Natural killer cell (primary cell): ENCODE measurements at regions of chr7 and their contacts with region 1.

Region 1: DNA sequence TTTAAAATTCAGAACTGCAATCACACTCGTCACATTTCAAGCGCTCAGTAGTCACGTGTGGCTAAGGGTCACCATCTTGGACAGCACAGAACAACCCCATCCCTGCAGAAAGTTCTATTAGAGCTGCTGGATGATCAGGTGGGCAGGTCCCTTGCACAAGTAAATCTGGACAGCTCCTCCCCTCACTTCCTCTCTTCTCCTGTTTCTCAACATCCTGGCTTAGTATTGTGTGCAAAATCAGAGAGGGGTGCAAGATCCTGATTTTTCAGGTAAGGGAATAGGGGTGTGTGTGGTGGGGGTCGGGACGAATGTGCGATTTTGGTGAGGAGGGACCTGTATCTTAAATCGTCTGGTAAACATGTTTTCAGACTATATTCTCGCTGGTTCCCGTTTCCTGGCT is at the start of gene GIMAP4:
- DNase-seq: peak in 1 of 2 donors; percentile 66
- ATAC-seq: peak; percentile 52 to 63 (median 58)
- H3K4me3 ChIP-seq: peak within 1 kb of the TSS; percentile 72
- H3K4me3 Mint-ChIP-seq: peak within 1 kb of the TSS; percentile 96
- H3K27ac ChIP-seq: peak within 1 kb of the TSS; percentile 66
- H3K27ac Mint-ChIP-seq: peak within 1 kb of the TSS; percentile 90 to 95
- H3K4me1 ChIP-seq: peaks cover 52% of the 10 kb centered on the region
- H3K4me1 Mint-ChIP-seq: peaks cover 69 to 80% of the 10 kb centered on the region in 2 donors
- H3K27me3 ChIP-seq: no peaks in the 10 kb centered on the region
- H3K27me3 Mint-ChIP-seq: no peaks in the 10 kb centered on the region
- CTCF ChIP-seq: no peak
- total RNA-seq, gene GIMAP4: 105 to 215 (median 124) TPM

Region 2: DNA sequence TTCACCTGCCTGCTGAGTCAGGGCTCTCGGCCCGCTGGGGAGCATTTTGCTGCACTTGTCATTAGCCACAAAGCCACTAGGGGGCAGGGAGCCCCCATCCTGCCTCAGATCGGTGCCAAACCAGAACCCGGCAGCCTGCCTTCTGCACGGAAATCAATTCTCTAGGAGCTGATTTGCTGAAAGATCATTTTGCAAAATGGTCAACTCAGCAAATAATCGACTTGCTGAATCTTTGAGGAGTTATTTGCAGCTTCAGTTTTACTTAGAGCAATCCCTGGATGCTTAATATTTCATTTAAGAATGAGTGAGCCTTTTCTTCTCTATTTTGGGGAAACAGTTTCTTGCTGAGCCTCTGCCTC is 118.4 kb before region 1 on chr7:
- intact Hi-C with region 1: loop called (anchors 2 kb)
- DNase-seq: peak; percentile 78 to 95
- ATAC-seq: peak; percentile 69 to 76 (median 72)
- H3K4me3 ChIP-seq: no peak overlapping the region
- H3K4me3 Mint-ChIP-seq: peak overlapping the region; percentile 96
- H3K27ac ChIP-seq: peak overlapping the region; percentile 89
- H3K27ac Mint-ChIP-seq: peak overlapping the region; percentile 92 to 97
- H3K4me1 ChIP-seq: peaks cover 68% of the 10 kb centered on the region
- H3K4me1 Mint-ChIP-seq: peaks cover 53 to 65% of the 10 kb centered on the region in 2 donors
- H3K27me3 ChIP-seq: no peaks in the 10 kb centered on the region
- H3K27me3 Mint-ChIP-seq: no peaks in the 10 kb centered on the region
- CTCF ChIP-seq: peak; percentile 93

Region 3: GRCh38 chr7:150514748-150515222 is 52.4 kb before region 1 on chr7 and contains the start of gene GIMAP7:
- intact Hi-C with region 1: loop called (anchors 2 kb)
- DNase-seq: peak; percentile 46 to 83
- ATAC-seq: peak; percentile 74 to 84 (median 81)
- H3K4me3 ChIP-seq: peak within 1 kb of the TSS; percentile 83
- H3K4me3 Mint-ChIP-seq: peak within 1 kb of the TSS; percentile 100
- H3K27ac ChIP-seq: peak within 1 kb of the TSS; percentile 73
- H3K27ac Mint-ChIP-seq: peak within 1 kb of the TSS; percentile 96 to 100
- H3K4me1 ChIP-seq: peaks cover 34% of the 10 kb centered on the region
- H3K4me1 Mint-ChIP-seq: peaks cover 58 to 65% of the 10 kb centered on the region in 2 donors
- H3K27me3 ChIP-seq: no peaks in the 10 kb centered on the region
- H3K27me3 Mint-ChIP-seq: no peaks in the 10 kb centered on the region
- CTCF ChIP-seq: no peak
- total RNA-seq, gene GIMAP7: 66.3 to 100 (median 67.6) TPM

Region 4: GRCh38 chr7:150556521-150557138 is 10.5 kb before region 1 on chr7:
- intact Hi-C with region 1: loop called (anchors 1 kb)
- DNase-seq: peak in 1 of 2 donors; percentile 79
- ATAC-seq: peak; percentile 97 to 99 (median 98)
- H3K4me3 ChIP-seq: no peak overlapping the region
- H3K4me3 Mint-ChIP-seq: peak overlapping the region; percentile 85
- H3K27ac ChIP-seq: peak overlapping the region; percentile 89
- H3K27ac Mint-ChIP-seq: peak overlapping the region; percentile 89 to 95
- H3K4me1 ChIP-seq: peaks cover 12% of the 10 kb centered on the region
- H3K4me1 Mint-ChIP-seq: peaks cover 50 to 63% of the 10 kb centered on the region in 2 donors
- H3K27me3 ChIP-seq: no peaks in the 10 kb centered on the region
- H3K27me3 Mint-ChIP-seq: no peaks in the 10 kb centered on the region
- CTCF ChIP-seq: no peak

Region 5: DNA sequence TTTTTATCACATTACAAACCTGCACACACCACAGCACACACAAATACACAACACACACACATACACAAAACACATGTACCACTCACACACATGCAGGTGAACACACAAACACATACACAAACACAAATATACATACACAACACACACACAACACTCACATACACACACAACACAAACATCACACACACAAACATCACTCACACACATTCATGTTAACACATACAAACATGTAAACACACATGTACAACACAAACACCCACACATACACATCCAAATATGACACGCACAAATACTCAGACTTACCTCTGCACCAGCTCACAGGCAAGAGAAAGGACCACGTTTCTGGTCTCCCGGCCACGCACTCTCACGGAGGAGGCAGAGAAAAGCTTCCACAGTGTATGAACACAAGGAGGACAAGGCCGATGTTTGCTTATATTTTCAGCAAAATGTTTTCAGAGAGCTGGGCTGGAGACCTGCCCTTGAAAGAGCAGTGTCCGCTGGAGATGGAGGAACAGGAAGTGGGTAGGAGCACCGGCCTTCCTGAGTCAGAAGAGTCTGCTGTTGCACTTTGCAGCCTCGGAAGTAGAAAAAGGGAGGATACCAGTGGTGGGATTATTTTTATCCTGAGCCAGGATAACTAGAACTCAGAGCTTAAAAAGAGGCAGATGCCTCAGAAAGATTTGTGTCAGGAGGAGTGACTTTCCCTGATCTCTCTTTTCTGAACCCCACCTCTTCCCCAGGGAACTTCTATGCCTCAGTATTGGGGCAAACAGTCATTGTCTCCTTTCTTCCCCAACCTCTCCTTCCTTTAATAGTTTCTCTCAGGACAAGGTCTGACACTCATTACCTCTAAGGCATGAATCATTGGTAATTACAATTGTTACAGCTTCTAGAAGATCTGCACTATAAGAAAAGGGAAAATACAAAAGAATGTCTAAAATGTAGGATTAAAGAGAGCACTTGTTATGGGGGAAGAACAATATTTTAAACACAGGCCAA is 65.0 kb after region 1 on chr7 and contains the start of gene GIMAP6:
- intact Hi-C with region 1: loop called (anchors 5 kb)
- DNase-seq: peak in 1 of 2 donors; percentile 68
- ATAC-seq: peak; percentile 66 to 76 (median 66)
- H3K4me3 ChIP-seq: peak within 1 kb of the TSS; percentile 61
- H3K4me3 Mint-ChIP-seq: peak within 1 kb of the TSS; percentile 86
- H3K27ac ChIP-seq: peak within 1 kb of the TSS; percentile 79
- H3K27ac Mint-ChIP-seq: peak within 1 kb of the TSS; percentile 72 to 93
- H3K4me1 ChIP-seq: peaks cover 52% of the 10 kb centered on the region
- H3K4me1 Mint-ChIP-seq: peaks cover 56 to 79% of the 10 kb centered on the region in 2 donors
- H3K27me3 ChIP-seq: no peaks in the 10 kb centered on the region
- H3K27me3 Mint-ChIP-seq: no peaks in the 10 kb centered on the region
- CTCF ChIP-seq: no peak
- total RNA-seq, gene GIMAP6: 39.7 to 100 (median 51.9) TPM

Region 6: GRCh38 chr7:150737265-150738055 is 170.3 kb after region 1 on chr7 and contains the start of gene GIMAP5:
- intact Hi-C with region 1: loop called (anchors 5 kb)
- DNase-seq: peak; percentile 51 to 71
- ATAC-seq: peak; percentile 85 to 88 (median 85)
- H3K4me3 ChIP-seq: peak within 1 kb of the TSS; percentile 84
- H3K4me3 Mint-ChIP-seq: peak within 1 kb of the TSS; percentile 91
- H3K27ac ChIP-seq: peak within 1 kb of the TSS; percentile 64
- H3K27ac Mint-ChIP-seq: peak within 1 kb of the TSS; percentile 86 to 91
- H3K4me1 ChIP-seq: peaks cover 35% of the 10 kb centered on the region
- H3K4me1 Mint-ChIP-seq: peaks cover 66 to 73% of the 10 kb centered on the region in 2 donors
- H3K27me3 ChIP-seq: no peaks in the 10 kb centered on the region
- H3K27me3 Mint-ChIP-seq: no peaks in the 10 kb centered on the region
- CTCF ChIP-seq: no peak
- total RNA-seq, gene GIMAP5: 29.2 to 64.1 (median 35.3) TPM

Region 7: GRCh38 chr7:151851145-151851751 is 1284.1 kb after region 1 on chr7:
- intact Hi-C with region 1: no loop called
- DNase-seq: peak in 1 of 2 donors; percentile 23
- ATAC-seq: peak; percentile 66 to 83 (median 79)
- H3K4me3 ChIP-seq: peak overlapping the region; percentile 30
- H3K4me3 Mint-ChIP-seq: peak overlapping the region; percentile 91
- H3K27ac ChIP-seq: peak overlapping the region; percentile 30
- H3K27ac Mint-ChIP-seq: peak overlapping the region; percentile 82 to 84
- H3K4me1 ChIP-seq: peaks cover 45% of the 10 kb centered on the region
- H3K4me1 Mint-ChIP-seq: peaks cover 31 to 32% of the 10 kb centered on the region in 2 donors
- H3K27me3 ChIP-seq: no peaks in the 10 kb centered on the region
- H3K27me3 Mint-ChIP-seq: no peaks in the 10 kb centered on the region
- CTCF ChIP-seq: no peak